Sigmoid colon (tissue), 7 donors: ENCODE measurements at regions of chr12 and their contacts with region 1.

Region 1: GRCh38 chr12:104230304-104231095 is 14.9 kb downstream of the TXNRD1 start:
- DNase-seq: no peak
- H3K4me3 ChIP-seq: no peak overlapping the region
- H3K27ac ChIP-seq: no peak overlapping the region
- H3K4me1 ChIP-seq: peaks cover 0 to 8% (median 0%) of the 10 kb centered on the region in 4 donors
- H3K27me3 ChIP-seq: no peaks in the 10 kb centered on the region
- CTCF ChIP-seq: no peak
- EP300 ChIP-seq: no peak
- POLR2A ChIP-seq: no peak

Region 2: DNA sequence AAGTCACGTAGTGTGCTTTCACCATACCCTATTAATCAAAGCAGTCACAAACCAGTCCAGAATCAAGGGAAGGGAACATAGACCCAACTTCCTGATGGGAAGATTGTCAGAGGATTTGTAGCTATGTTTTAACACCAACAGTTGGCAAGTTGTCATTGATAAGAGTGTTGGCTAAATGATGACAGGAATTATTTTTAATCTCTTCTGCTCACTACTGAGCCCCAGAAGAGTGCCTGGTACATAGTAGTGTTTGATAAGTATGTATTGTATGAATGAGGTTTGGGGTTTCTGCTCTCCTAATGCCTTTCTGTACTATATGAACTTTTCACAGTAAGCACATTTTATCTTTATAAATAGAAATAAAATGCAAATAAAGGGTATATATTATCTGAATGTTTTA is 151.5 kb before region 1 on chr12:
- intact Hi-C with region 1: no loop called
- DNase-seq: no peak
- H3K4me3 ChIP-seq: no peak overlapping the region
- H3K27ac ChIP-seq: no peak overlapping the region
- H3K4me1 ChIP-seq: peaks cover 0 to 11% (median 2%) of the 10 kb centered on the region in 4 donors
- H3K27me3 ChIP-seq: no peaks in the 10 kb centered on the region
- CTCF ChIP-seq: no peak
- EP300 ChIP-seq: no peak
- POLR2A ChIP-seq: no peak

Region 3: DNA sequence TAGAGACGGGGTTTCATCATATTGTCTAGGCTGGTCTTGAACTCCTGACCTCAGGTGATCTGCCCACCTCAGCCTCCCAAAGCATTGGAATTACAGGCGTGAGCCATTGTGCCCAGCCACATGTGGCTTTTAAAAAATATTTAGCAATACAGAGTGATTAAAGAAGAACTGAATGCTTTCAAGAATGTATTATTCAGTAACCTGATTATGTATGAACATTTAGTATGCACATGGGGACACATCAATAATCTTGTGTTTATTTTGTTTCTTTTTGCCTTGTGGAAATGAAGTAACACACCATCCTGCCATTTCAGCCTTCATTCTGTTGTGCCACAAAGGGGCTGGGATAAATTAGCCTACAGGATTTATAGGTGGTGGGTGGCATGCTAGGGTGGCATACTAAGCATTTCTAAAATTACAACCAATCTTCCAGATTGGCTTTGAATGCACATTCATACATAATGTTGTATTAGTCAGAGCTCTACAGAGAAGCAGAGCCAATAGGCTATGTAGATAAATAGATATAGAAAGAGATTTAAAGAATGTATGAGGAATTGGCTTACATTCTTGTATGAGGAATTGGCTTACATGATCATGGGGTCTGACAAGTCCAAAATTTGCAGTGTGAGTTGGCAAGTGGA is 40.5 kb before region 1 on chr12:
- intact Hi-C with region 1: no loop called
- DNase-seq: no peak
- H3K4me3 ChIP-seq: no peak overlapping the region
- H3K27ac ChIP-seq: peak overlapping the region in 1 of 4 donors; percentile 14
- H3K4me1 ChIP-seq: peaks cover 0 to 17% (median 14%) of the 10 kb centered on the region in 4 donors
- H3K27me3 ChIP-seq: no peaks in the 10 kb centered on the region
- CTCF ChIP-seq: no peak
- EP300 ChIP-seq: no peak
- POLR2A ChIP-seq: no peak

Region 4: DNA sequence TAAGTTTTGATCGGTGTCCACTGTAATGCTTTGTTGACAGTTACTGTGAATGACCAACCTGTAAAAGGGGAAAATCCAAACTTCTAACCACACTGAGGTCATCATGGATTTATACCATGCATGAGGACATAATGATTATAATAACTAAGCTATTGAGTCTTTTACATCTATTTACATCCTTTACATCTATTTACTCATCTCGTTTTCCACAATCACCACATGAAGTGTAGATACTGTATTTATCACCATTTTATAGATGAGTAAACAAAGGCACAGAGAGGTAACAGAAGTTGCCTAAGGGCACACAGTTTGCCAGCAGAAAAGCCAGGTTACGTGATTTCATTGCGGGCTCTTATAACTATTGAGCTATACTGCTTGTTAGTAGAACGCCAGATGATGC is 45.2 kb after region 1 on chr12:
- intact Hi-C with region 1: loop called (anchors 2 kb)
- DNase-seq: no peak
- H3K4me3 ChIP-seq: peak overlapping the region in 1 of 4 donors; percentile 36
- H3K27ac ChIP-seq: peak overlapping the region in 1 of 4 donors; percentile 53
- H3K4me1 ChIP-seq: peaks cover 0 to 13% (median 9%) of the 10 kb centered on the region in 4 donors
- H3K27me3 ChIP-seq: no peaks in the 10 kb centered on the region
- CTCF ChIP-seq: no peak
- EP300 ChIP-seq: no peak
- POLR2A ChIP-seq: no peak

Region 5: DNA sequence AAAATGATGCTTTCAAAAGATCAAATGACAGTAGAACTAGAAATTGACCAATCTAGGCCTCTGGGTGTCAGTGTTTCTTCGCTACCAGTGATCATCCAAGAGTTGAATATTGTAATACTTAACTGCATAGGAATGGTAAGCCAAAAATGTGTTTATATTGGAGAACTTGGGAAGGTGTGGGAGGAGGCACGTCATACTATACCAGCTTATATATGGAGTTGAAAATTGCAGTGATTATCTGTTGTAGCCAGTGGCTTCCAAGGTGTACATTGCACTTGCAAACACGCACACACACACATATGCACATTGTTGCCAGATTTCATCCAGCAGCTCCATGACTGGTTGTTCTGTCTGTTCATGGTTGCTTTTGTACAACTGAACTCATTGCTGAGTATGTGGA is 109.2 kb after region 1 on chr12:
- intact Hi-C with region 1: no loop called
- DNase-seq: no peak
- H3K4me3 ChIP-seq: no peak overlapping the region
- H3K27ac ChIP-seq: peak overlapping the region in 2 of 4 donors; percentile 18 to 51
- H3K4me1 ChIP-seq: peaks cover 0 to 40% (median 26%) of the 10 kb centered on the region in 4 donors
- H3K27me3 ChIP-seq: no peaks in the 10 kb centered on the region
- CTCF ChIP-seq: no peak
- EP300 ChIP-seq: no peak
- POLR2A ChIP-seq: no peak

Region 6: DNA sequence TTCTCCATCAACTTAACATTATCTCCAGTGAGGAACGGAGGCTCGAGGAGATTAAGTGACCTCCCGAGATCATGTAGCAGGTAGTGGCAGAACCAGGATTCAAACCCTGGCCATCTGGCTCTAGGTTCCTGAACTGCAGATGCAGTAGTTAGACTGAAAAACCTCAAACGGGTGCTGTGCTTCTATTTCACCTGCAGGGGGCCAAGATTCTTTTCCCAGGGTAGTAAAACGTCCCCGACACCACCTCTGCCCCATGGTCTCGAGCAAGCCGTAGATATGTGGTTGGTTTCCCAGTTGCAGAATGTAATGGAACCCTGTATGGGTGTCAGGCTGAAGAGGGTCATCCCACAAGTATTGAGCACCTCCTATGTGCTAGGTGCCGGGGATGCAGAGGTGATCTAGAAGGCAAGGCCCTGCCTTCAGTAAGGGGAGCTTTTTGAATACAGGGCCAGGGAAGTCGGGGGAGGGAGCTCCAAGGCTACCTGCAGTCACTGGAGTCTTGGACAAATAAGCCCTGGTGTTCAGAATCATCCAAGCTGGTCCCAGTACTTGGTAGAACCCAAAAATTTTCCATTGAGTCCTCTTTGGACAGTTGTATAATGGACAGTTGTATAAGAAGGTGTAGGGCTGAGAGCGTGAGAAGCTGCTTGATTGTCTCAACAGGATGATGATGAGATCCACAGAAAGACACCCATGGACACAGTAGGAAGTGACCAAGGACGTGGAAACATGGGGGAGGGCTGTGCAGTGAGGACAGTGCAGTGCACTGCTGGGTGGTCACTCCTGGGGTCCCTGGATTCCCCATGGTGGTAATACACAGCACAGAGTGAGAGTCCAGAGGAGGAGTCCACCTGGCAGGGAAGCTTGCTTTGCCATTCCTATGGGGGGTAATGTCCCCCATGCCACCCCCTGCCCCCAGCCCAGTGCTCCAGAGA is 423.5 kb after region 1 on chr12:
- intact Hi-C with region 1: no loop called
- DNase-seq: no peak
- H3K4me3 ChIP-seq: no peak overlapping the region
- H3K27ac ChIP-seq: no peak overlapping the region
- H3K4me1 ChIP-seq: peaks cover 0 to 10% (median 3%) of the 10 kb centered on the region in 4 donors
- H3K27me3 ChIP-seq: no peaks in the 10 kb centered on the region
- CTCF ChIP-seq: no peak
- EP300 ChIP-seq: no peak
- POLR2A ChIP-seq: no peak